Endothelial cell of umbilical vein (primary cell): ENCODE measurements at regions of chr1 and their contacts with region 1.

Region 1: GRCh38 chr1:244599937-244600350 is 53.0 kb upstream of the DESI2 start:
- DNase-seq: peak; percentile 96
- H3K4me3 ChIP-seq: peak overlapping the region in 2 of 3 experiments; percentile 12 to 63
- H3K27ac ChIP-seq: peak overlapping the region; percentile 92
- H3K4me1 ChIP-seq: peaks cover 15% of the 10 kb centered on the region
- H3K27me3 ChIP-seq: peaks cover 0 to 2% of the 10 kb centered on the region in 2 experiments
- CTCF ChIP-seq: no peak
- POLR2A ChIP-seq: no peak

Region 2: DNA sequence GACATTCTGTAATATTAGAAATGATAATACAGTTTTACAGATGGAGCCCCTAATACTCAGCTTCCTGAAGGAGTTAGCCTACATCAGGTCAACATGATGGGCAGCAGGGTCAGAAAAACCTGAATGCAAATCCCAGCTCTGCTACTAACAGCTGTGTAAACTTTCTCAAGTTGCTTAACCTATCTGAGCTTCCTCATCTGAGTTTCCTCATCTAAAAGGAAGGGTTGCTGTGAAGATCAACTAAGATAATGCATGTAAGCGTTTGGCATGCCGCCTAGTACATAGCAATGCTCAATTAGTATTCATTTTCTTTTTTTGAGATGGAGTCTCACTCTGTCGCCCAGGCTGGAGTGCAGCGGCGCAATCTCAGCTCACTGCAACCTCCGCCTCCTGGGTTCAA is 34.6 kb after region 1 on chr1:
- CTCF ChIA-PET with region 1: interaction called, 10 read pairs
- POLR2A ChIA-PET with region 1: no interaction called
- dilution Hi-C with region 1: no loop called
- intact Hi-C with region 1: no loop called
- DNase-seq: no peak
- H3K4me3 ChIP-seq: no peak overlapping the region
- H3K27ac ChIP-seq: no peak overlapping the region
- H3K4me1 ChIP-seq: no peaks in the 10 kb centered on the region
- H3K27me3 ChIP-seq: peaks cover 4 to 5% of the 10 kb centered on the region in 2 experiments
- CTCF ChIP-seq: no peak
- POLR2A ChIP-seq: no peak

Region 3: GRCh38 chr1:244665771-244666217 is 65.8 kb after region 1 on chr1:
- CTCF ChIA-PET with region 1: no interaction called
- POLR2A ChIA-PET with region 1: no interaction called
- dilution Hi-C with region 1: no loop called
- intact Hi-C with region 1: no loop called
- DNase-seq: no peak
- H3K4me3 ChIP-seq: no peak overlapping the region
- H3K27ac ChIP-seq: no peak overlapping the region
- H3K4me1 ChIP-seq: no peaks in the 10 kb centered on the region
- H3K27me3 ChIP-seq: no peaks in the 10 kb centered on the region
- CTCF ChIP-seq: no peak
- POLR2A ChIP-seq: no peak

Region 4: GRCh38 chr1:244730153-244730933 is 130.4 kb after region 1 on chr1:
- CTCF ChIA-PET with region 1: interaction called, 13 read pairs
- POLR2A ChIA-PET with region 1: no interaction called
- dilution Hi-C with region 1: no loop called
- intact Hi-C with region 1: loop called (anchors 5 kb)
- DNase-seq: peak; percentile 49
- H3K4me3 ChIP-seq: peak overlapping the region; percentile 46 to 67 (median 61)
- H3K27ac ChIP-seq: no peak overlapping the region
- H3K4me1 ChIP-seq: peaks cover 8% of the 10 kb centered on the region
- H3K27me3 ChIP-seq: no peaks in the 10 kb centered on the region
- CTCF ChIP-seq: no peak
- POLR2A ChIP-seq: no peak

Region 5: DNA sequence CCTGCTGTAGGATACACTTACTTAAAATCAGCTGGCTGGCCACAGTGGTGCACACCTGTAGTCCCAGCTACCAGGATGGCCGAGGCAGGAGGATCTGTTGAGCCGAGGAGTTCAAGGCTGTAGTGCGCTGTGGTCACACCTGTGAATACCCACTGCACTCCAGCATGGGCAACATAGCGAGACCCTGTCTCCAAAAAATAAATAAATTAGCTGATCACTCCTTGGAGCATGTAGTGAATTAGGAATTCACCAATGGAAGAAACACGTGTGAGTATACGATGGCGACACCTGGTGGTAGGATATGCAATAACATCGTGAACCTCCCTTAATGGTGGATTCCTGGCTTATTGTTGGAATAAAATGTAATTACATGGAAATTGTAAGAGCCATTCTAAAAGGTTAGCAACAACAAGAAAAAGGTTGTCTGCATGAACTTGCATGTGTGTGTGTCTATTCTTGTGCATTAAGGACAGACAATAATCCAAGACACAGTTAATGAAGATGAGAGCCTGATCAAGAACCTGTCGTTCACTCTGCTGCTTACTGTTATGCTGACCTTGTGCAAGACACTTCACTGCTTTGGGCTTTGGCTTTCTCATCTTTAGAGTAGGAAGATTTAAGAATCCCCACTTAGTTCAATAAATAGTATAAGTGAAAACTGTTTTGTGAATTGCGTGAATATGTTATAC is 196.9 kb after region 1 on chr1:
- CTCF ChIA-PET with region 1: interaction called, 295 read pairs
- POLR2A ChIA-PET with region 1: no interaction called
- dilution Hi-C with region 1: no loop called
- intact Hi-C with region 1: loop called (anchors 1 kb)
- DNase-seq: peak; percentile 70
- H3K4me3 ChIP-seq: no peak overlapping the region
- H3K27ac ChIP-seq: no peak overlapping the region
- H3K4me1 ChIP-seq: no peaks in the 10 kb centered on the region
- H3K27me3 ChIP-seq: no peaks in the 10 kb centered on the region
- CTCF ChIP-seq: peak; percentile 63 to 69
- POLR2A ChIP-seq: no peak

Region 6: GRCh38 chr1:244937099-244937498 is 337.2 kb after region 1 on chr1:
- CTCF ChIA-PET with region 1: no interaction called
- POLR2A ChIA-PET with region 1: no interaction called
- dilution Hi-C with region 1: no loop called
- intact Hi-C with region 1: no loop called
- DNase-seq: no peak
- H3K4me3 ChIP-seq: no peak overlapping the region
- H3K27ac ChIP-seq: no peak overlapping the region
- H3K4me1 ChIP-seq: no peaks in the 10 kb centered on the region
- H3K27me3 ChIP-seq: no peaks in the 10 kb centered on the region
- CTCF ChIP-seq: no peak
- POLR2A ChIP-seq: no peak

Region 7: DNA sequence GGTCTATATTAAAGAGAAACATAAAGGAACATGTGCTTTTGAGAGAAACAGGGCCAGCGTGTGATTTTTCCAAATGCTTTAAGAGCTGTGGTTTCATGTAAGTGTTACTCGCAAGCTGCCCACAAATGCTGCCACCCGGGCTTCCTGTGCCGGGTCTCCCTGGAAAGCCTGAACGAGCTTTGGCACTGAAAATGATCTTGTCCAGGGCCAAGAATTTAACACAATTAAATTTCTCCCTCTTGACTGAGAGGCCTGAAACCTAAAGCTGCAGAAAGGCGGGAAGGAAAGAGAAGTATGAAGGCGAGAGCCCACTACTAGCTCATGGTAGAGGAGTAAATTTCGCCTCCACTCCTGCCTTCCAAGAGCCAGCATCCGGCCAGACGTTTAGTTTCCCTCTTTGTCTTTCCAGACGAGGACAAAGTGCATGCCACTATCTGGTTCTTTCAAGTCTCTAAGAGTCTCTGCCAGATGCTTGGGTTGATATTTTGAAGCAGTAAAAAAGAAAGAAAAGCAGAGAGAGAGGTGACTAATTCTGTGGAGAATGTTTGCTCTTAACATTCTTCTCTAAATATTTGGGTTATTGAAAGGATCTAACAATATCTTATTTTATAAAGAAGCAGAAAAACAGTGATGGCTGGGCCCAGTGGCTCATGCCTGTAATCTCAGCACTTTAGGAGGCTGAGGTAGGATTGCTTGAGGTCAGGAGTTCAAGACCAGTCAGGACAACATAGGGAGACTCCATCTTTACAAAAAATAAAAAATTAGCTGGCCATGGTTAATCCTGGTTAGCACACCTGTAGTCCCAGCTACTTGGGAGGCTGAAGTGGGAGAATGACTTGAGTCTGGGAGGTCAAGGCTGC is 364.4 kb after region 1 on chr1:
- CTCF ChIA-PET with region 1: interaction called, 3 read pairs
- POLR2A ChIA-PET with region 1: no interaction called
- dilution Hi-C with region 1: no loop called
- intact Hi-C with region 1: loop called (anchors 5 kb)
- DNase-seq: peak; percentile 82
- H3K4me3 ChIP-seq: peak overlapping the region in 1 of 3 experiments; percentile 15
- H3K27ac ChIP-seq: peak overlapping the region; percentile 95
- H3K4me1 ChIP-seq: peaks cover 34% of the 10 kb centered on the region
- H3K27me3 ChIP-seq: no peaks in the 10 kb centered on the region
- CTCF ChIP-seq: no peak
- POLR2A ChIP-seq: peak; percentile 49